Activated CD4-positive, alpha-beta T cell treated with anti-CD3 and anti-CD28 coated beads for 36 hours (primary cell): ENCODE measurements at regions of chr14 and their contacts with region 1.

Region 1: GRCh38 chr14:49892636-49893308 is at the start of gene ARF6:
- DNase-seq: peak; percentile 98
- ATAC-seq: peak; percentile 76
- H3K4me3 Mint-ChIP-seq: peak within 1 kb of the TSS; percentile 91
- H3K27ac Mint-ChIP-seq: peak within 1 kb of the TSS; percentile 98
- H3K4me1 Mint-ChIP-seq: peaks cover 16% of the 10 kb centered on the region
- H3K27me3 Mint-ChIP-seq: no peaks in the 10 kb centered on the region
- total RNA-seq, gene ARF6: 172 to 181 TPM

Region 2: GRCh38 chr14:49767562-49768300 is 125.0 kb before region 1 on chr14 and contains the start of gene KLHDC2:
- CTCF ChIA-PET with region 1: interaction called, 3 read pairs
- POLR2A ChIA-PET with region 1: no interaction called
- intact Hi-C with region 1: loop called in 1 of 2 experiments (anchors 1 kb)
- DNase-seq: peak; percentile 94
- ATAC-seq: peak; percentile 79
- H3K4me3 Mint-ChIP-seq: peak within 1 kb of the TSS; percentile 96
- H3K27ac Mint-ChIP-seq: peak within 1 kb of the TSS; percentile 99
- H3K4me1 Mint-ChIP-seq: peaks cover 30% of the 10 kb centered on the region
- H3K27me3 Mint-ChIP-seq: no peaks in the 10 kb centered on the region
- total RNA-seq, gene KLHDC2: 16.0 to 22.4 TPM

Region 3: GRCh38 chr14:49879683-49880204 is 13.0 kb before region 1 on chr14:
- CTCF ChIA-PET with region 1: interaction called, 19 read pairs
- POLR2A ChIA-PET with region 1: no interaction called
- intact Hi-C with region 1: loop called (anchors 1 kb)
- DNase-seq: peak; percentile 85
- ATAC-seq: peak; percentile 92
- H3K4me3 Mint-ChIP-seq: no peak overlapping the region
- H3K27ac Mint-ChIP-seq: peak overlapping the region; percentile 47
- H3K4me1 Mint-ChIP-seq: peaks cover 27% of the 10 kb centered on the region
- H3K27me3 Mint-ChIP-seq: no peaks in the 10 kb centered on the region

Region 4: GRCh38 chr14:49934646-49935045 is 41.9 kb after region 1 on chr14:
- CTCF ChIA-PET with region 1: no interaction called
- POLR2A ChIA-PET with region 1: no interaction called
- intact Hi-C with region 1: no loop called
- DNase-seq: no peak
- ATAC-seq: no peak
- H3K4me3 Mint-ChIP-seq: no peak overlapping the region
- H3K27ac Mint-ChIP-seq: no peak overlapping the region
- H3K4me1 Mint-ChIP-seq: peaks cover 12% of the 10 kb centered on the region
- H3K27me3 Mint-ChIP-seq: no peaks in the 10 kb centered on the region

Region 5: GRCh38 chr14:50003213-50004031 is 110.7 kb after region 1 on chr14:
- CTCF ChIA-PET with region 1: interaction called, 5 read pairs
- POLR2A ChIA-PET with region 1: interaction called, 35 read pairs
- intact Hi-C with region 1: loop called (anchors 1 kb)
- DNase-seq: peak; percentile 90
- ATAC-seq: peak; percentile 2
- H3K4me3 Mint-ChIP-seq: peak overlapping the region; percentile 75
- H3K27ac Mint-ChIP-seq: peak overlapping the region; percentile 98
- H3K4me1 Mint-ChIP-seq: peaks cover 56% of the 10 kb centered on the region
- H3K27me3 Mint-ChIP-seq: no peaks in the 10 kb centered on the region

Region 6: DNA sequence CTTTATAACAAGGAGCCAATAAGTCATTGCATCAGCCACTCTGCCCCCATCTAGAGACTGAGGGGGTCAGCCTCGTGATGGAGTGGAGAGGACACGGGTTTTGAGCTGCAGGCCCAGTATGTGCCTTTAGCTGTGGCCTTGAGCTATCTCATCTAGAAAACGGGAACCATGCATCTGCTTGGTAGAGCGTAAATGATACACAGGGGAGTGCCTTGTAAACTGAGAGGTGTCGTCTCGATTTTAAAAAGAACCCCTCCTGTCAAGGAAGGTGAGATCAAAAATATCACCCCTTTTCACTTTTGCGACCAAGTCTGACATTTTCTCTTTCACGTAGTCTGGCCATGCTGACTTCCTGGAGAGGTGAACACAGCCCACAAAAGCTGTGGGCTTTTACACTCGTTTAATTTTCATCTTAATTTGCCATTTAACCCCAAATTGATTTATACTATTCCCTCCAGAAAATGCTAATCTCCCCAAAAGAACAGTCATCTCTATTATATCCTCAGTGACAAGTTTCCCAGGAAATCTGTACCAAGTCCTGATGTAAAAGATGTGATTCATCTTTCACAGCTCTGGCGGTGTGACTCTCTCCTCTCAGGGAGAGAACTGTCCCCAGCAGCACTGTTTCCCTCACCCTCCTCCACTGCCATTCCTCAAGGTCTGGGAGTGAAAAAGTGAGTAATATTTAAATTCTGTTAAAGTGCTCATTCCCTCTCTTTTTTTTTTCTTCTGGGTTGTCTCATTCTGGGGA is 193.0 kb after region 1 on chr14:
- CTCF ChIA-PET with region 1: interaction called, 3 read pairs
- POLR2A ChIA-PET with region 1: interaction called, 17 read pairs
- intact Hi-C with region 1: loop called (anchors 1 kb)
- DNase-seq: peak; percentile 71
- ATAC-seq: peak; percentile 27
- H3K4me3 Mint-ChIP-seq: peak overlapping the region; percentile 45
- H3K27ac Mint-ChIP-seq: peak overlapping the region; percentile 94
- H3K4me1 Mint-ChIP-seq: peaks cover 94% of the 10 kb centered on the region
- H3K27me3 Mint-ChIP-seq: no peaks in the 10 kb centered on the region

Region 7: DNA sequence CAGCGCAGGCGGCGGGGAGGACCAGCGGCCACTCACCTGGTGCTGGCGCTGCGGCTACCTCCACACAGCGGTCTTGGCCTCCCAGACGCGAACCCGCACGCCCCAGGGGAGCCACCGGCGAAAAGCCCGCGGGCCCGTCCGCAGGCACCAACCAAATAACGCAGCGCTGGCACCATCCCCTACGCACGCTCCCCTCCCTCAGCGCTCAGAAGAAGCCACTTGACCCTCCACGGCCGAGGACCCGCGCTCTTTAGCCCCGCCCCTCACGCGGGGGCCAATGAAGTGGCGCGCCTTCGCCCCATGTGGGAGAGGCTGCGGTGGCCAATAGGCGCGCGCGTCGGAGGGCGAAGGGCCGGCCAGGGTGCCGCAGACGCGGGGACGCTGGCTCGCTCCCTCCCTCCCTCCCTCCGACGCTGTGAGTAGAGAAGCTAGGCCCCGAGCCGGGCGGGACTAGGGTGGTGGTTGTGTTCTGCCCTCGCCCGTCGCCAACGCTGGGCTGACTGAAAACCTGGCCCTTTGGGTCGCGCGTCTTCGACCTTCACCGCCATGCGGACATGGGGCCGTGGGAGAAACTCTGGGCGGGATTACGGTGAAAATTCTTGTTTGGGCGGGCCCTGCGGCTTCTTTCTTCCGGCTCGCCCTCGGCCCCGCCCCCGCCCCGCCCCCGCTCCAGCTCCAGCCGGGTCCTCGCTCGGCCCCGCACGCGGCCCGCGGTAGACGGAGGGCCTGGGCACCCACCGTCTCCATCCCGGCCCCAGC is 419.4 kb after region 1 on chr14 and contains the starts of genes DMAC2L and L2HGDH:
- CTCF ChIA-PET with region 1: no interaction called
- POLR2A ChIA-PET with region 1: no interaction called
- intact Hi-C with region 1: loop called in 1 of 2 experiments (anchors 2 kb)
- DNase-seq: peak; percentile 93
- ATAC-seq: peak; percentile 95
- H3K4me3 Mint-ChIP-seq: peak within 1 kb of the TSS; percentile 85
- H3K27ac Mint-ChIP-seq: peak within 1 kb of the TSS; percentile 95
- H3K4me1 Mint-ChIP-seq: peaks cover 41% of the 10 kb centered on the region
- H3K27me3 Mint-ChIP-seq: no peaks in the 10 kb centered on the region
- total RNA-seq, gene DMAC2L: 7.4 to 12.6 TPM
- total RNA-seq, gene L2HGDH: 12.8 to 19.0 TPM